ENCODE measurements at regions of chr1 and their contacts with region 1.

Region 1: DNA sequence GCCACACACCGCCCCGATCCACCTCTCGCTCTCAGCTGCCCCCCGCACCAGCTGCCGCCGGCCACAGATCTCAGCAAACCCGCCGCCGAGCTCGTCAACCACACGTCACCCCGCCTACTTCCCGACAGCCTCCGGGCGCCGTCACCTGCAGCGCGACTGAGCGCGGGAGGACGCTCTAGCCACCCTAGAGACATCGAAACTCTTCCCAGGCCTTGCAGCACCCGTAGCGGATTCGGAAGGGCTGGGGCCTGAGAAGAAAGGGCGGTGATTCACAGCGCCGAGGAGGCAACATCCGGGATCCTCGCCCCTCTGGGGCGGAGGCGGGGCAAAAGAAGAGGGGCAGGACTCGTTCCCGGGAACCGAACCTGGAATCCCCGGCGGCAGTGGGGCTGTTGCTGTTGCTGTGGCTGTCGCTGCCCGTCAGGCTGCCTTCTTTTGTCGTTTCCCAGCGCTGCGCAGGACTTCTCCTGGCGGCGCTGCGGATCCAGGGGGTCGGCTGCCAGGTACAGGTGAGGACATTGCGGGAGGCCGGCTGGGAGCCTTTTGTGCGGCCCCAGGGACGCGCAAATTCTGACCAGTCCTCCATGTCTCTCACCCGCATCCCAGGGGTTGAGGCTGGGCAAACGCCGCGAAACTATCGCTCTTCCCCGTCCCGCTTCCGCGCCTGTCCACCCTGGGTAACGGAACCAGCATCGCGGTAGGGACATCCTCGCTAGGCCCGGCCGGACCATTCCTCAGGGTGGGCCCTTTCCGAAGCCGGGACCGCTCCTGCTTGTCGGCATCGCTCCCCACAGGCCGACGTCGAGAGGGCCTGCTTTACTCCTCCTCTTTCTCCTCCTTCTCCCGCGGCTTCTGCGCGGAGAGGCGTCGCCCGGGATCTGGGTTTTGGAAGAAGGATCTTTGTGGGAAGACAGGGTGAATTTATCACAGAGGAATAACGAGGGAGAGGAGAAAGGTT is at the starts of genes RO60 and UCHL5:
- DNase-seq: peak; percentile 95
- ATAC-seq: peak; percentile 89
- H3K4me3 ChIP-seq: peak within 1 kb of the TSS; percentile 87
- H3K27ac ChIP-seq: peak within 1 kb of the TSS; percentile 86
- H3K4me1 ChIP-seq: peaks cover 42% of the 10 kb centered on the region
- H3K27me3 ChIP-seq: no peaks in the 10 kb centered on the region
- CTCF ChIP-seq: no peak
- total RNA-seq, gene RO60: 37.9 and 45.4 TPM in 2 replicates
- total RNA-seq, gene UCHL5: 31.3 and 32.3 TPM in 2 replicates

Region 2: GRCh38 chr1:193121616-193122593 is 62.4 kb after region 1 on chr1 and contains the start of gene CDC73:
- CTCF ChIA-PET with region 1: interaction called, 5 read pairs
- POLR2A ChIA-PET with region 1: no interaction called
- intact Hi-C with region 1: loop called (anchors 5 kb)
- DNase-seq: peak; percentile 94
- ATAC-seq: peak; percentile 94
- H3K4me3 ChIP-seq: peak within 1 kb of the TSS; percentile 81
- H3K27ac ChIP-seq: peak within 1 kb of the TSS; percentile 81
- H3K4me1 ChIP-seq: peaks cover 19% of the 10 kb centered on the region
- H3K27me3 ChIP-seq: no peaks in the 10 kb centered on the region
- CTCF ChIP-seq: peak; percentile 66
- total RNA-seq, gene CDC73: 10.0 and 13.4 TPM in 2 replicates

Measured in PC-3 (cell line).